Head of caudate nucleus (tissue), 42 donors: ENCODE measurements at regions of chr3 and their contacts with region 1.

Region 1: GRCh38 chr3:160413613-160414248 is 14.3 kb downstream of the SMC4 start:
- DNase-seq: peak in 41 of 42 donors; percentile 7 to 87 (median 71)

Region 2: DNA sequence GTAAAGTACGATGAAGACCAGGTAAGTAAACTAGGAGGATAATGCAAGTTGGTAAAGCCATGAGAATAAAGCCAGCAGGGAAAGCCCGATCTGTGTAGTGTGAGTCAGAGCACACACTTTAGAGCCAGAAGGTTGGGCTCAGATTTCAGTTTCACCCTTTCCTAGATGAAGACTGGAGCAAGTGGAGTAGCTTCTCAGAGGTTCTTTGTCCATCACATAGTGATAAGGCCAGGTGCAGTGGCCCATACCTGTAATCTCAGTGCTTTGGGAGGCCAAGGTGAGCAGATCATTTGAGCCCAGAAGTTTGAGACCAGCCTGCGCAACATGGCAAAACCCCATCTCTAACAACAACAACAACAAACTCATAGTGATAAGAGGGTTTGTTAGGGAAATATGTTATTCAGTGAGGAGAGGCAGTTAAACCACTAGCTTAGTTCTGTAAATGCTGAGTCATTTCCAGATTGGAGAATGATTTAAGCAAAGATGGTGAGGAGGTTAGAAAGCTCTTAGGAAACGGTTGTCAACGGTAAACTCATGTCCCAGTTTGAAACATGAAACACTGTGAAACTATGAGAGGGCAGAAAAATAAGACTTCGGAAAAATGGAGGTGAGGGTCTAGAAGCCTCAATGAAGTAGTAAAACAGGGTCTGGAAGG is 386.1 kb before region 1 on chr3:
- intact Hi-C with region 1: loop called (anchors 2 kb)
- DNase-seq: no peak

Region 3: DNA sequence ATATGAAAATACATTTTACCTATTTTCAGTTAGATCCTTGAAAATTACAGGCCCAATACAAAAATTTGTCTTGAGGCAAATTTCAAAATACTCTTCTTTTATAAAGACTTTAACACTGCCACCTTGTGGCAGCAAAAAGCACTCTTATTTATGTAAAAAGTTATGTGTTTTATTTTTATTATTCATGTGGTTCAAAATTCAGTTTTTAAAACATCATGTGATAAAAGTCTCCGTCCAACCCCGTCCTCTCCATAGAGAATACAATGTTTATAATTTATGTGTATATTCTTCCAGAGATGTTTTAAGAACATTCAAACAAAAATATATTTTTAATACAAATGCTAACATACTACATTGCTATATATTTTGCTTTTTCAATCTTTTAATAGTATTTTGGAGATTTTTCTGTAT is 72.7 kb after region 1 on chr3:
- intact Hi-C with region 1: loop called (anchors 10 kb)
- DNase-seq: peak in 1 of 42 donors; percentile 64